Transverse colon (tissue), 4 donors: ENCODE measurements at regions of chr5 and their contacts with region 1.

Region 1: DNA sequence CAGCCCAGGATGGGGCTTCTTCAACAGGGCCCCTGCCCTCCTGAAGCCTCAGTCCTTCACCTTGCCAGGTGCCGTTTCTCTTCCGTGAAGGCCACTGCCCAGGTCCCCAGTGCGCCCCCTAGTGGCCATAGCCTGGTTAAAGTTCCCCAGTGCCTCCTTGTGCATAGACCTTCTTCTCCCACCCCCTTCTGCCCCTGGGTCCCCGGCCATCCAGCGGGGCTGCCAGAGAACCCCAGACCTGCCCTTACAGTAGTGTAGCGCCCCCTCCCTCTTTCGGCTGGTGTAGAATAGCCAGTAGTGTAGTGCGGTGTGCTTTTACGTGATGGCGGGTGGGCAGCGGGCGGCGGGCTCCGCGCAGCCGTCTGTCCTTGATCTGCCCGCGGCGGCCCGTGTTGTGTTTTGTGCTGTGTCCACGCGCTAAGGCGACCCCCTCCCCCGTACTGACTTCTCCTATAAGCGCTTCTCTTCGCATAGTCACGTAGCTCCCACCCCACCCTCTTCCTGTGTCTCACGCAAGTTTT is 23.6 kb downstream of the PCDHGC5 start:
- DNase-seq: peak; percentile 90
- H3K4me3 ChIP-seq: peak overlapping the region; percentile 43 to 50 (median 48)
- H3K27ac ChIP-seq: peak overlapping the region; percentile 78 to 91 (median 89)
- H3K4me1 ChIP-seq: peaks cover 23 to 54% (median 34%) of the 10 kb centered on the region in 4 donors
- H3K27me3 ChIP-seq: no peaks in the 10 kb centered on the region
- CTCF ChIP-seq: peak; percentile 85 to 94 (median 87)
- EP300 ChIP-seq: no peak
- POLR2A ChIP-seq: no peak

Region 2: DNA sequence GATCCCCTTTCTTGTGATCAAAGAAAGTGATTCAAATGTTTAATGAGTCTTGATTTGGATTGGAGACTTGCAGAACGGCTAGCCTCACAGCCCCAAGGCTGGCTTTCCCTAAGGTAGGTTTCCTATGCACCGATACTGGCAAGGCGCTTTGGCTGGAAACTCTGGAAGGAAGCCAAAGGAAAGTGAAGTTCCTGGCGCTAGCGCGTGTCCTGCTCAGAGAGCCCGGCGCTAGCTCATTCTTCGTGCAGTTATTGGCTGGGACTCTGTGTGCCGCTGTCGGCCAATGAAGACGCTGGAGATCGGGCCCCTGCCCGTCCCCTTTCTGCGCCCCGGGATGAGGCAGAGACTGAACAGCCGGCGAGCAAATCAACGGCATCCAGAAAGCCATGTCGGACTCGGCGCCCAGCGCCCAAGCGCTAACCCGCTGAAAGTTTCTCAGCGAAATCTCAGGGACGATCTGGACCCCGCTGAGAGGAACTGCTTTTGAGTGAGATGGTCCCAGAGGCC is 36.8 kb before region 1 on chr5 and contains the start of gene PCDHGC3:
- in situ Hi-C with region 1: no loop called
- intact Hi-C with region 1: loop called (anchors 5 kb)
- DNase-seq: peak; percentile 89
- H3K4me3 ChIP-seq: peak within 1 kb of the TSS; percentile 46 to 75 (median 62)
- H3K27ac ChIP-seq: peak within 1 kb of the TSS; percentile 85 to 93 (median 89)
- H3K4me1 ChIP-seq: peaks cover 5 to 47% (median 23%) of the 10 kb centered on the region in 4 donors
- H3K27me3 ChIP-seq: peaks cover 7% of the 10 kb centered on the region
- CTCF ChIP-seq: peak in 3 of 5 experiments; percentile 6 to 35 (median 25)
- EP300 ChIP-seq: no peak
- POLR2A ChIP-seq: peak; percentile 64
- total RNA-seq, gene PCDHGC3: 6.0 to 17.0 (median 13.6) TPM